Activated CD4-positive, alpha-beta T cell treated with anti-CD3 and anti-CD28 coated beads, Interleukin-2, amount 10 ng/mL, durations not matched to agents 24 days and 14 days (primary cell): ENCODE measurements at regions of chr7 and their contacts with region 1.

Region 1: DNA sequence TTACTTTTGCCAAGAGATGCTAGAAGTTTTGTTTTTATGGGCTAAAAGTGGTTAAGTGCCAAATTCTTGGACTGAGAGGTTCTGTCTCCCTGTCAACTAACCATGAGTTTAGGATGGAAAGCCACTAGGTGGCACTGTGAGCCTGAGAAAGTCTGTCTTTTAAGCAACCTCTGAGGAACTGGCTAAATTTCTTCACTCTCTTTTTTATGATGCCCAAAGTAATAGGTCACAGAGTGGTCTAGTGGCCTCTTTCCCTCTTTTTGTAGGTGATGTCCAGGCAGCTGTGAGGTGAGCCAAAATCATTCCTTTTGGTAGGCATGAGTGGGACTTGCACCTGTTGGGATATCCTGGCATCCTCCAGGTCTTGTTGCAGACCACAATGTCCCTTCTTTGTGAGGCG is 56.8 kb downstream of the SND1 start:
- DNase-seq: peak; percentile 92
- H3K4me3 Mint-ChIP-seq: no peak overlapping the region
- H3K27ac Mint-ChIP-seq: peak overlapping the region; percentile 51
- H3K4me1 Mint-ChIP-seq: peaks cover 5% of the 10 kb centered on the region
- H3K27me3 Mint-ChIP-seq: no peaks in the 10 kb centered on the region

Region 2: DNA sequence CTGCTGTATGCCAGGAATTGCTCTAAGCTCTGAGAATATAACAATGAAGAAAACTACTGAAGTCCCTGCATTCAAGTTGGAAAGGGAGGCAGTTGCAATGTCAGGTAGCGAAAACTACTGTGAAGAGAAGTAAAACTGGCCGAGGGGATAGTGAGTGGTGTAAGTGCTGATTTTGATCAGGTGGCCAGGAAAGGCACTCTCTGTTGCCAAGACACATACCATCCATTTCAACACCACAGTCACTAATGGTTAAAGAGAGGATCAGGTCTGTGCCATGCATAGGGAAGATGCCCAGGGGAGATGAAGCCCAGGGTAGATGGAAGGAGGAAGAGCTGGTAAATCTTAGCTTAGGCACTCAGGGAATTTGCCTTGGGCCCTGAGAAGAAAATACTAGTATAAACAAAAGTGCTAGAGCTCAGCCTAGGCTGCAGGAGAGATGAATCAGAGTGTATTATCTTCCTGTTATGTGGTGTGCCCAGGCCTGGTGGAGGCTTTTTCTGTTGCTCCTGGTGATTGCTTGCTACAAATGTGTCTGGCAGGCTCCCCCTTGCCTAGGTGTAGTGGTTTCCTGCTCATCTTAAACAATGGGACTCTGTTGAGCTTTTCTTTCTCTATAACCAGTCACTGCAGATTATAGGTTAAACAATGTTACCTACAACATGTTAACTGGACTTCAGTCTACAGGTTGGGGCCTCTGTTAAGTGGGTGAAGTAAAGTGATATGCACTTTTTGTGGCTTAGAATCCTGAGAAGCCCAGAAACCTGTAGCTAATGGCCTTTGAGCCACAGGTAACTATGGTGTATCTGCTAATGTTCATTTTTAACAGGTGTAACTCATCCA is 196.9 kb after region 1 on chr7:
- intact Hi-C with region 1: loop called (anchors 5 kb)
- DNase-seq: peak; percentile 75
- H3K4me3 Mint-ChIP-seq: no peak overlapping the region
- H3K27ac Mint-ChIP-seq: peak overlapping the region; percentile 74
- H3K4me1 Mint-ChIP-seq: peaks cover 61% of the 10 kb centered on the region
- H3K27me3 Mint-ChIP-seq: no peaks in the 10 kb centered on the region

Region 3: DNA sequence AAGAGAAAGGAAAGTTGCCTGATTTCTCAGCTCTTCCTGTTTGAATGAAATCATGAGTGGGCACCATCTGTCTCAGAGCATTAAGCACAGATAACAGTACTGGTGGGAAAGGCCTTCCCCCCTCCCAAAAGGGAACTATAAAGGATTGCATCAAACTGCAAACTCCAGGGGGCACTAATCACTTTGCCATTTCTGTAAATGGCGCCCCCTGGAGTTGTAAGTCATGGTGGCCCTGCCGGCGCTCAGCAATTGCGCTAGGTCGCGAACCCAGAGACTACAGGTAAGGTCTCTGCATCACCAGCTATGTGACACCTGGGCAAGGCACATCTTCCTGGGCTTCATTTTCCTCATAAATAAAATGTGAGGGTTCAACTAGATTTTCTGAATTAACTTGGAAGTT is 311.4 kb after region 1 on chr7:
- intact Hi-C with region 1: loop called (anchors 10 kb)
- DNase-seq: peak; percentile 73
- H3K4me3 Mint-ChIP-seq: no peak overlapping the region
- H3K27ac Mint-ChIP-seq: no peak overlapping the region
- H3K4me1 Mint-ChIP-seq: peaks cover 9% of the 10 kb centered on the region
- H3K27me3 Mint-ChIP-seq: no peaks in the 10 kb centered on the region

Region 4: DNA sequence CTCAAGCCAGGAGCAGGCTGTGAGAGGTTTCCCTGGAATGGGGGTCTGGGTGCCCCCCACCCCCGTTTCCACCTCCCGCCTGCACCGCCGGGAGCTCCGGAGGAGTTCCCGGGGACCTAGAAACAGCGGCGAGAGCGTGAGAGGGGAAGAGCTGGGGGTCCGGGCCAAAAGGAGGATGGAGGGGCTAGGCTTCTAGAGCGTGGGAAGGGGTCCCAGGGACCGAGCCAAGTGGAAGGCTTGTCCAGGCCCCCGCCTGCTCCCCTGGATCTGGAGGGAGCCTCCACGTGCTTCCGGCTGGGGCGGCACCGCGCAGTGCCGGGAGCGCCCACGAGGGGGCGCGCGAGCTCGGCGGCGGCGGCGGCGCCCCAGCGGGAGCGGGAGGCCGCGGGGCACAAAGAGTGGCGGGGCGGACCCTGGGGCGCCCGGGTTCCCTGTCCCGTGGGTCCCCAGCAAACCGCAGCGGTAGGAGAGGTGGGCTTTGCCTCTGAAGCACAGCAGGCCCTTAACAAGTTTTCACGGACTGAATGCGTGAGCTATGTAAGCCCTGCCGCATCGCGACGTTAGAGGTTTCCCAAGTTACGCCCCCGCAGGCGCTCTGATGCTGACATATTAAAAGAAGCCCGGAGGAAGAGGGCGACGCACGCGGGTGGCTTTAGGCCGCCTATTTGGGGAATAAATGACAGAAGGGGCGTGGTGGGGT is 426.9 kb after region 1 on chr7:
- intact Hi-C with region 1: loop called (anchors 5 kb)
- DNase-seq: peak; percentile 91
- H3K4me3 Mint-ChIP-seq: peak overlapping the region; percentile 80
- H3K27ac Mint-ChIP-seq: peak overlapping the region; percentile 56
- H3K4me1 Mint-ChIP-seq: peaks cover 13% of the 10 kb centered on the region
- H3K27me3 Mint-ChIP-seq: peaks cover 46% of the 10 kb centered on the region